ENCODE measurements at regions of chr4 and their contacts with region 1.

Region 1: DNA sequence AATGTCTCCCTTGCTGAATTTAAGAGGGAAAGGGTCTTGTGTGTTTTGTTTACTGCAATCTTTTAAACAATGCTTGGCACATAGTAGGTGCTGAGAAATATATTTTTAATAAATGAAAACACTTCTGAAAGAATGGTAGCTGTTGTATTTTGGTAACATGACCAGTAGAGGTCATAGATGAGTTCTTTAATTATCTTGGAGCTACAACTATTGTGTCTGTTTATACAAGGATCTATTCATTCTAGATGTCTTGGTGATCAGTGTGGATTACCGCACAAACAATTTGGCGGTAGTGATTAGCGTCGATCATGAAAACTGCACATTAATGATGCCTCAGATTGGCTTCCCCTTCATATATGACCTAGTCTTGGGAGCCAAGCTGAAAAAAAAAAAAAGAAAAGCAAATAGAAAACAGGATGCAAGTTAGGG is 21.4 kb upstream of the SCRG1 start:
- DNase-seq: peak in 4 of 5 donors; percentile 17 to 35 (median 26)
- H3K4me3 ChIP-seq: no peak overlapping the region
- H3K4me3 Mint-ChIP-seq: peak overlapping the region in 1 of 8 donors; percentile 0
- H3K27ac ChIP-seq: no peak overlapping the region
- H3K27ac Mint-ChIP-seq: no peak overlapping the region
- H3K4me1 ChIP-seq: peaks cover 10% of the 10 kb centered on the region
- H3K4me1 Mint-ChIP-seq: peaks cover 11 to 16% (median 14%) of the 10 kb centered on the region in 4 donors
- H3K27me3 ChIP-seq: no peaks in the 10 kb centered on the region
- H3K27me3 Mint-ChIP-seq: no peaks in the 10 kb centered on the region

Region 2: GRCh38 chr4:173288296-173288695 is 132.0 kb before region 1 on chr4:
- CTCF ChIA-PET with region 1: interaction called, 10 read pairs
- POLR2A ChIA-PET with region 1: no interaction called
- intact Hi-C with region 1: loop called (anchors 1 kb)
- DNase-seq: peak; percentile 45 to 68 (median 52)
- H3K4me3 ChIP-seq: no peak overlapping the region
- H3K4me3 Mint-ChIP-seq: peak overlapping the region in 6 of 8 donors; percentile 21 to 59 (median 43)
- H3K27ac ChIP-seq: no peak overlapping the region
- H3K27ac Mint-ChIP-seq: peak overlapping the region in 6 of 7 donors; percentile 16 to 78 (median 32)
- H3K4me1 ChIP-seq: peaks cover 11% of the 10 kb centered on the region
- H3K4me1 Mint-ChIP-seq: peaks cover 8 to 17% (median 13%) of the 10 kb centered on the region in 4 donors
- H3K27me3 ChIP-seq: no peaks in the 10 kb centered on the region
- H3K27me3 Mint-ChIP-seq: no peaks in the 10 kb centered on the region

Region 3: DNA sequence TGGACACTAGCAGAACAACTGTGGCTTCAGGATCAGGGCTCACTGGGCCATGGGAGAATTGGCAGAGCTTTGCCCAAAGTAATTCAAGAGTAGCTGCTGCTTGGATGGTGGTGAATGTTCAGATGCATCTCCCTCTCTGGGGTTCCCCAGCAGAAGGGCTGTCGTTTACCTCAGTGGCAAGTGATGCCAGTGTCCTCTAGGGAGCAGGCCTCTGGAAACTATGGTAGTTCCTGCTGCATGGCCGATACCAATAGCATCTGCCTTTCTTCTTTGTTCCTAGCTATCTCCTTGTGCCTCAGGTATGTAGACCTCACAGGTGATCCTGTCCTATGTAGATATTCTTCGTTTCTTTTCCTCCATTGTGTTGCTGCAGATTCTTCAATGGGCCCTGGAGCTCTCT is 112.6 kb before region 1 on chr4:
- CTCF ChIA-PET with region 1: interaction called, 16 read pairs
- POLR2A ChIA-PET with region 1: no interaction called
- intact Hi-C with region 1: no loop called
- DNase-seq: no peak
- H3K4me3 ChIP-seq: no peak overlapping the region
- H3K4me3 Mint-ChIP-seq: no peak overlapping the region
- H3K27ac ChIP-seq: no peak overlapping the region
- H3K27ac Mint-ChIP-seq: peak overlapping the region in 1 of 7 donors; percentile 5
- H3K4me1 ChIP-seq: no peaks in the 10 kb centered on the region
- H3K4me1 Mint-ChIP-seq: no peaks in the 10 kb centered on the region
- H3K27me3 ChIP-seq: no peaks in the 10 kb centered on the region
- H3K27me3 Mint-ChIP-seq: no peaks in the 10 kb centered on the region

Region 4: DNA sequence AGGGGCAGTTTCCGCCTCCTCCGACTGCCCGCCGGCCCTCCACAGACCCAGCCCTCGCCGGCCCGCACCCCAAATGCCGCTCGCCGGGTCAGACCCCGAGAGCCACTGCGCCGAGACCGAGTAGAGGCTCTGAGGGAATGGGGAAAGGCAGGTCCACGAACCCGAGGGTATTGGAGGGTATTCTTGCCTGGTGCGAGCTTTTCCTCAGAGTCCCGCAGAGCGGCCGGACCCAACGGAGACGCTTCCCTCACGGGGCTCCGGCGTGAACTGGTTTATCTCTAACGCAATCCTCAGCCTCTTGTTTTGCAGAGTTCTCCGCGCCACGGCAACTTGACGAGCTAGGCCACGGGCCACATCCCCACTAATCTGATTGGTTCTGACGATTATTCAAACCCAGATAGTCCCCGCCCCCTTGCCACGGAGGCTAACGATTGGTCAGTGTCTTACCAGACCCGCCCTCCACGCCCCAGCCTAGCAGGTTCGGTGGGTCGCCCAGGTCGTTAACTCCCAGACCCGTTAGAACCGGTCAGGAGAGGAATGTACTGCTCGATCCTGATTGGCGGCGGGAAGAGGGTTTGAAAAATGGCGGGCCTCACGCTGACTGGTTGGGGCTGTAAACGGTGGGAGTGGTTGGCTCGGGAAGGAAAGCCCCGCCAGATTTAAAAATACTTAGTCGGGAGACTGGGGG is 86.1 kb before region 1 on chr4 and contains the start of gene HMGB2:
- CTCF ChIA-PET with region 1: interaction called, 11 read pairs
- POLR2A ChIA-PET with region 1: interaction called, 7 read pairs
- intact Hi-C with region 1: no loop called
- DNase-seq: peak; percentile 98 to 100 (median 100)
- H3K4me3 ChIP-seq: peak within 1 kb of the TSS; percentile 92 to 95
- H3K4me3 Mint-ChIP-seq: peak within 1 kb of the TSS; percentile 97 to 100 (median 98)
- H3K27ac ChIP-seq: peak within 1 kb of the TSS; percentile 91
- H3K27ac Mint-ChIP-seq: peak within 1 kb of the TSS; percentile 95 to 99 (median 98)
- H3K4me1 ChIP-seq: peaks cover 26% of the 10 kb centered on the region
- H3K4me1 Mint-ChIP-seq: peaks cover 17 to 33% (median 21%) of the 10 kb centered on the region in 4 donors
- H3K27me3 ChIP-seq: no peaks in the 10 kb centered on the region
- H3K27me3 Mint-ChIP-seq: peaks cover 0 to 2% of the 10 kb centered on the region in 2 donors
- total RNA-seq, gene HMGB2: 110 to 116 TPM

Region 5: DNA sequence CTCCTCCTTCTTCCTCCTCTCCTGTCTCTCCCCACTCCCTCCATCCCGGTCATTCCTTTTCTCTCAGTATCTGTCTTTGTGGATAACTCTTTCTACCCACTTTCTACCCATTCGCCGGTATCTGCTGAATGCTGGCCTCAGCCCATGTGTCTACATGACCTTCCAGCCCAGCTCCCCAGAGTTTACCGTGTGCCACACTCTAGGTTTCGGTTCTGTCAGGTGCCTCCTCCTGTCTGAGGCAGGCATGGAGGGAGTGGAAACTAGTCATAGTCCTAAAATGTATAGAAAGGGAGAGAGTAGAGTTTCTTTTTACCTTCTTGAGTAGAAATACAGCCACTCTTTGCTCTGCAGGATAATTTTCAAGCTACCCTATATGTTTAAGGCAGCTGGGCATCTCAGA is 12.1 kb after region 1 on chr4:
- CTCF ChIA-PET with region 1: interaction called, 16 read pairs
- POLR2A ChIA-PET with region 1: no interaction called
- intact Hi-C with region 1: no loop called
- DNase-seq: no peak
- H3K4me3 ChIP-seq: no peak overlapping the region
- H3K4me3 Mint-ChIP-seq: peak overlapping the region in 2 of 8 donors; percentile 26 to 60
- H3K27ac ChIP-seq: no peak overlapping the region
- H3K27ac Mint-ChIP-seq: peak overlapping the region in 1 of 7 donors; percentile 44
- H3K4me1 ChIP-seq: peaks cover under 1% of the 10 kb centered on the region
- H3K4me1 Mint-ChIP-seq: peaks cover 2 to 15% (median 11%) of the 10 kb centered on the region in 4 donors
- H3K27me3 ChIP-seq: no peaks in the 10 kb centered on the region
- H3K27me3 Mint-ChIP-seq: no peaks in the 10 kb centered on the region

Region 6: GRCh38 chr4:174156239-174156826 is 736.0 kb after region 1 on chr4:
- CTCF ChIA-PET with region 1: no interaction called
- POLR2A ChIA-PET with region 1: no interaction called
- intact Hi-C with region 1: loop called (anchors 5 kb)
- DNase-seq: peak in 4 of 5 donors; percentile 4 to 14 (median 10)
- H3K4me3 ChIP-seq: no peak overlapping the region
- H3K4me3 Mint-ChIP-seq: no peak overlapping the region
- H3K27ac ChIP-seq: no peak overlapping the region
- H3K27ac Mint-ChIP-seq: no peak overlapping the region
- H3K4me1 ChIP-seq: no peaks in the 10 kb centered on the region
- H3K4me1 Mint-ChIP-seq: no peaks in the 10 kb centered on the region
- H3K27me3 ChIP-seq: peaks cover 6% of the 10 kb centered on the region
- H3K27me3 Mint-ChIP-seq: peaks cover 11 to 17% of the 10 kb centered on the region in 2 donors

Region 7: DNA sequence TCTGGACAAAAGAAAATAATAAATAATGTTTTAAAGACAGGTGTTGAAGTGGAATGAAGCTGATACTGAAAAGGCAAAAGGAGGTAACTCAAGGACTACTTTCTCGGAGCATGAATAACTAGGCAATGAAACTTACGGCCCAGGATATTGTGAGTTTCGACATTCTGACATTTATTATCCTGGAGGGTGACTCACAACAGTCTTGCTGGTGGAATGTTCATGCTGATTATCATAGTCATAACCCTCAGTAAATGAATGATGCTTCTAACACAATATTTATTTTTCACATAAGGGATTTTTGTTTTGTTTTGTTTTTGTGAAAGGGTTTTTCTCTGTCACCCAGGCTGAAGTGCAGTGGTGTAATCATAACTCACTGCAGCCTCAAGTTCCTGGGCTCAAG is 1248.9 kb after region 1 on chr4:
- CTCF ChIA-PET with region 1: no interaction called
- POLR2A ChIA-PET with region 1: no interaction called
- intact Hi-C with region 1: no loop called
- DNase-seq: no peak
- H3K4me3 ChIP-seq: no peak overlapping the region
- H3K4me3 Mint-ChIP-seq: no peak overlapping the region
- H3K27ac ChIP-seq: no peak overlapping the region
- H3K27ac Mint-ChIP-seq: no peak overlapping the region
- H3K4me1 ChIP-seq: no peaks in the 10 kb centered on the region
- H3K4me1 Mint-ChIP-seq: no peaks in the 10 kb centered on the region
- H3K27me3 ChIP-seq: no peaks in the 10 kb centered on the region
- H3K27me3 Mint-ChIP-seq: no peaks in the 10 kb centered on the region

Region 8: DNA sequence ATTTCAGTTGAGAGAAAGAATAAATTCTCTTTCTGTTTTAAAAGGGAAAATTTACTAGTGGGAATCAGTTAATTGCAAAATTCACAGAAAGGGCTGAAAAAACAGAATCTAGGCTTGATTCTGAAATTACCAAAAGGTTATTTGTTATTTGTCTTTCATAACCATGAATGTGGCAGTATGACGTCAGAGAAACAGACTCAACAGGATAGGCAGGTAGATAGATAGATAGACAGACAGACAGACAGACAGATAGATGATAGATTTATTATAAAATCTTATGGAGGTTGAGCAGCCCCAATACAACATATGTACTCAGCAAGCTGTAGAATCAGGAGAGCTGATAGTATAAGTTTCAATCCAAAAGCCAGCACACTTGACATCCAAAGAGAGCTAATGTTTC is 1808.8 kb after region 1 on chr4:
- CTCF ChIA-PET with region 1: no interaction called
- POLR2A ChIA-PET with region 1: no interaction called
- intact Hi-C with region 1: no loop called
- DNase-seq: no peak
- H3K4me3 ChIP-seq: no peak overlapping the region
- H3K4me3 Mint-ChIP-seq: no peak overlapping the region
- H3K27ac ChIP-seq: no peak overlapping the region
- H3K27ac Mint-ChIP-seq: no peak overlapping the region
- H3K4me1 ChIP-seq: no peaks in the 10 kb centered on the region
- H3K4me1 Mint-ChIP-seq: no peaks in the 10 kb centered on the region
- H3K27me3 ChIP-seq: no peaks in the 10 kb centered on the region
- H3K27me3 Mint-ChIP-seq: no peaks in the 10 kb centered on the region

Measured in CD4-positive, alpha-beta memory T cell (primary cell).